Transverse colon (tissue), 4 donors: ENCODE measurements at regions of chr7 and their contacts with region 1.

Region 1: DNA sequence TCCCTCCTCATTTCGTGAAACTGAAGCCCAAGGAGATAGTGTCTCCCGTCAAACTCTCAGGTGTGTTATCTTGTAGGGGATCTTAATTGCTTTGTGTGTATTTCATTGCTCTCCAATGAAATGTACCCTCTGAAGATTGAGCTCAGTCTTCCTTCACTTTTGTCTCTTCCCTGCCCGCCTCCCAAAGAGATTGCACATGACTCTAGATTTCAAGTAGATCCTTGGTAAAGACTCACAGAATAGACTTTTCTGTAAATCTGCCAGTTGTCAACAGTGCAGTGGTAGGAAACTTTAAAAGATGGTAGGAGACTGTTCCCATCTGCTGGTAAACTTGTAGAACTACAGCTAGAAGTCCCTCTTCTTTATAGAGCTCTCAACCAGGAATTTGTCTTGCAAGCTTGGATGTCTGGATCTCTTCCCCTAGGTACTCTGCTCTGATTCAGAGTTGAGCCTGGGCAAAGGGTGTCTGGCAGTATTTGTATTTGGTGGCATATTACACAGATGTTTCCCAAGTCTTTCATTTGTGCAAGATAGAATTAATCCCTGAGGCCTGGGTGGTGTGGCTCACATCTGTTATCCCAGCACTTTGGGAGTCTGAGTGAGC is 9.6 kb downstream of the CCL26 start:
- DNase-seq: no peak
- H3K4me3 ChIP-seq: no peak overlapping the region
- H3K27ac ChIP-seq: no peak overlapping the region
- H3K4me1 ChIP-seq: peaks cover 0 to 3% (median 0%) of the 10 kb centered on the region in 4 donors
- H3K27me3 ChIP-seq: no peaks in the 10 kb centered on the region
- CTCF ChIP-seq: peak; percentile 66 to 82 (median 74)
- EP300 ChIP-seq: no peak
- POLR2A ChIP-seq: no peak

Region 2: DNA sequence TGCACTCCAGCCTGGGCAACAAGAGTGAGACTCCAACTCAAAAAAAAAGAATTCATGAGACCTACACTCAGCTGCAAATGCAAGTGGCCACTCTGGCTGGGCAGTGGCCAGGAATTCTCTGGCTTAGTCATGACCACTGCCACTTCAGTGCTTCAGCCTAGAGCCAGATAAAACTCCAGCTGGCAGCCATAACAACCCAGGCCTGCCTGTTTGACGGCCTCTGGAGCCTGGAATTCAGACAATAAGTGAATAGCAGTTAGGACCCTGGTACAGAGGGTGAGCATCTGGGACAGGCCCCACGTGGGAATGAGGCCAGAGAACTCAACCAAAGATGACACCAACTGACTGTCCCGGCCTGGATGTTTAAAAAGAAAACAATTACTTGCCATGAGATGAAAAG is 707.7 kb before region 1 on chr7:
- in situ Hi-C with region 1: loop called in 1 of 4 experiments (anchors 25 kb)
- intact Hi-C with region 1: no loop called
- DNase-seq: no peak
- H3K4me3 ChIP-seq: no peak overlapping the region
- H3K27ac ChIP-seq: peak overlapping the region in 3 of 4 donors; percentile 63 to 79 (median 69)
- H3K4me1 ChIP-seq: peaks cover 0 to 6% (median 0%) of the 10 kb centered on the region in 4 donors
- H3K27me3 ChIP-seq: no peaks in the 10 kb centered on the region
- CTCF ChIP-seq: no peak
- EP300 ChIP-seq: no peak
- POLR2A ChIP-seq: no peak

Region 3: GRCh38 chr7:75534727-75535307 is 227.6 kb before region 1 on chr7:
- in situ Hi-C with region 1: loop called in 3 of 4 experiments (anchors 10 to 25 kb)
- intact Hi-C with region 1: no loop called
- DNase-seq: no peak
- H3K4me3 ChIP-seq: no peak overlapping the region
- H3K27ac ChIP-seq: no peak overlapping the region
- H3K4me1 ChIP-seq: no peaks in the 10 kb centered on the region
- H3K27me3 ChIP-seq: no peaks in the 10 kb centered on the region
- CTCF ChIP-seq: no peak
- EP300 ChIP-seq: no peak
- POLR2A ChIP-seq: no peak

Region 4: DNA sequence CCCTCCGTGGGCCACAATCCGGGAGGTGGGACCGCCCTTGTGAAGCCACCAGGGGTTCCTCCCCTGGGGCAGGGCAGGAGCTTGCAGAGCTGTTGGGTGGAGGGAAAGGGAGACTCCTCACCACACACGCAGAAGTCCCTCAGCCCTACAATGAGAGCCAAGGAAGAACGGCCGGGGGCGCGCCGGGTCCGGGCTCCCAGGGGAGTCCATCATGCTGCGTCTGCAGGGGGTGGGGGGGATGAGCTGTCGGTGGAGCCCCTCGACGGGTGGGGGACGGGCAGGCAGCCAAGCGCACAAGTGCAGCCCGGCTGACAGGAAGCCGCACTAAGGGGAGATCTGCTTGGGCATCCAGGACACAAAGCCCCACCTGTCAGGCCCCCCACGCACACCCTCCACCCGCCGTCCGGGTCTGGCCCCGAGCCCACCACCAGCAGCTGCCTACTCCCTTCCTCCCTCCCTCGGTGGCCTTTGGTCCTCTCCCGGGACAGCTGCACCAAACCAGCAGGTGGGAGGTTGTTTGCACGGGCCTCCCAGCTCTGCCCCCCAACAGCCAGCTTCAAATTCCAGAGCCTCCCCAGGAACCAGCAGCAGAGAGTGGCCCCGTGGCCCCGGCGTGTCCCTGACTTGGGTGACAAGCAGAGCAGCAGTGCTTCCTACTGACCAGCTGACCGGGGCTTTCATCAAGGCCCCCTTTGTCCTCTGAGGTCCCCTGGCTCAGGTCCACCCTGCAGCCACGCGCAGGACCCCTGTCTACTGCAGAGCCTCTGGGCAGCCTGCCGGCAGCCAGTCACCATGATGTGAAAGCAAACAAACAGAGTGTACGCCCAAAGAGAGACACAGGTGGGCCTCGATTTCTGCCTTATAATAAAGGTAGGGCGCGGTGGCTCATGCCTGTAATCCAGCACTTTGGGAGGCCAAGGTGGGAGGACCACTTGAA is 73.9 kb before region 1 on chr7:
- in situ Hi-C with region 1: no loop called
- intact Hi-C with region 1: no loop called
- DNase-seq: no peak
- H3K4me3 ChIP-seq: no peak overlapping the region
- H3K27ac ChIP-seq: no peak overlapping the region
- H3K4me1 ChIP-seq: peaks cover 0 to 6% (median 2%) of the 10 kb centered on the region in 4 donors
- H3K27me3 ChIP-seq: no peaks in the 10 kb centered on the region
- CTCF ChIP-seq: no peak
- EP300 ChIP-seq: no peak
- POLR2A ChIP-seq: no peak

Region 5: GRCh38 chr7:75789361-75789924 is 27.0 kb after region 1 on chr7:
- in situ Hi-C with region 1: no loop called
- intact Hi-C with region 1: no loop called
- DNase-seq: no peak
- H3K4me3 ChIP-seq: no peak overlapping the region
- H3K27ac ChIP-seq: no peak overlapping the region
- H3K4me1 ChIP-seq: peaks cover 0 to 16% (median 11%) of the 10 kb centered on the region in 4 donors
- H3K27me3 ChIP-seq: no peaks in the 10 kb centered on the region
- CTCF ChIP-seq: no peak
- EP300 ChIP-seq: no peak
- POLR2A ChIP-seq: no peak

Region 6: GRCh38 chr7:75823198-75823910 is 60.9 kb after region 1 on chr7:
- in situ Hi-C with region 1: no loop called
- intact Hi-C with region 1: no loop called
- DNase-seq: peak; percentile 25
- H3K4me3 ChIP-seq: no peak overlapping the region
- H3K27ac ChIP-seq: peak overlapping the region in 1 of 4 donors; percentile 34
- H3K4me1 ChIP-seq: no peaks in the 10 kb centered on the region
- H3K27me3 ChIP-seq: no peaks in the 10 kb centered on the region
- CTCF ChIP-seq: no peak
- EP300 ChIP-seq: no peak
- POLR2A ChIP-seq: no peak

Region 7: DNA sequence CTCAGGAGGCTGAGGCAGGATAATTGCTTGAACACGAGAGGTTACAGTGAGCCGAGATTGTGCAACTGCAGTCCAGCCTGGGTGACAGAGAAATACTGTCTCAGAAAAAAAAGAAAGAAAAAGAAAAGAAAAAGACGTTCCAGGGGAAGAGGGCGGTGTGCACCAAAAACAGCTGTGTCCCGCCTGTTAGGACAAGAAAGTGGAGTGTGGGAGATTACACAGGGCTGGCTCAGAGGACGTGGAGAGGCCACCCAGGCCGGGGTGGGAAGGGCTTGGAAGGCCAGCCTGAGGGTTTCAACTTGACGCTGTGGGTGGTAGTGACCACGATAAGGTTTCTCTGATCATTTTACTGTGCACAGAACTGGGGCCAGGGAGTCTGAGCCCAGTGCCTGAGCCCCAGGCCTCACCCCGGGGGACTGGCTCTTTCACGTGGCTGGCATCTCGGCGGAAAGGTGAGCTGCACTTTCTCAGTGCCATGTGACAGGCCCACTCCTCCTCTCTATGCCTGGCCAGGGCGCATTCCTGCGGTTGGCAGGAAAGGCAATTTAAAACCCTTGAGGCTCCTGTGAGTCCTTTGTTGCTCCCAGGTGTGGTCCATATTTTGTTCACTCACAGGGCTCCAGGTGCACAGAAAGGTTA is 130.3 kb after region 1 on chr7:
- in situ Hi-C with region 1: no loop called
- intact Hi-C with region 1: no loop called
- DNase-seq: peak; percentile 33
- H3K4me3 ChIP-seq: no peak overlapping the region
- H3K27ac ChIP-seq: no peak overlapping the region
- H3K4me1 ChIP-seq: no peaks in the 10 kb centered on the region
- H3K27me3 ChIP-seq: no peaks in the 10 kb centered on the region
- CTCF ChIP-seq: no peak
- EP300 ChIP-seq: no peak
- POLR2A ChIP-seq: no peak